Activated T-helper 2 cell treated with anti-CD3 and anti-CD28 coated beads, Interferon-gamma antibody, Interleukin-2, Interleukin-4, amounts not matched to agents 10 μg/mL and 5 μg/mL and 100 μg/mL, durations not matched to agents 14 hours and 24 hours and 36 hours (primary cell): ENCODE measurements at regions of chr10 and their contacts with region 1.

Region 1: GRCh38 chr10:104328896-104329710 is 9.2 kb downstream of the ITPRIP start:
- DNase-seq: peak; percentile 44
- H3K4me3 Mint-ChIP-seq: peak overlapping the region; percentile 68
- H3K27ac Mint-ChIP-seq: peak overlapping the region; percentile 90
- H3K4me1 Mint-ChIP-seq: peaks cover 91% of the 10 kb centered on the region
- H3K27me3 Mint-ChIP-seq: no peaks in the 10 kb centered on the region

Region 2: DNA sequence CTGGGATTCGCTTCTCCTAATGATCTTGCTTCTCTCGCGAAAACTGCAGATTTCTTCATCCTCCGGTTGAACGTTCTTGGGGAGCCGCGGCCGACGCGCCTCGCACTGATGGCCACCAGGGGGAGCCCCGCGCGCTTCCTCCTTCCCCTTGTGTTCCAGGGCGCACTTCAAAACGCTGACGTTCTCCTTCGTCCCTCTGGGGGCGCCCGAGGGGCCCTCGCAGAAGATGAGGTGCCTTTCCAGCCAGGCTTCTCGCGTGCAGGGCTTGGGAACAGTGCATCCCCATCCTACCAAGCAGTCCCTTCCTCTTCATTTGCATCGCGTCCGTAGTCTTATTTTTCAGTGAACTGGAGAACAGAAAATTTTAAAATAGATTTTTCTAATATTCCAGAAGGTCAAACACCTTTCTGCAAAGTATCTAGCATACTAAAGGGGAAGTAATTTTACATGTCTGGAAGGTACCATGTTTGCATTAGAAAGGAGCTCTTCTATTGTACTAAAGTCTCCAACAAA is 37.6 kb before region 1 on chr10:
- intact Hi-C with region 1: loop called (anchors 2 kb)
- DNase-seq: peak; percentile 80
- H3K4me3 Mint-ChIP-seq: no peak overlapping the region
- H3K27ac Mint-ChIP-seq: no peak overlapping the region
- H3K4me1 Mint-ChIP-seq: peaks cover 13% of the 10 kb centered on the region
- H3K27me3 Mint-ChIP-seq: peaks cover 38% of the 10 kb centered on the region